Activated CD4-positive, alpha-beta T cell treated with anti-CD3 and anti-CD28 coated beads, Interleukin-2, amount 10 ng/mL, durations not matched to agents 24 days and 14 days (primary cell): ENCODE measurements at regions of chr4 and their contacts with region 1.

Region 1: GRCh38 chr4:119300101-119300978 is 21.6 kb downstream of the FABP2 start:
- DNase-seq: peak; percentile 98
- H3K4me3 Mint-ChIP-seq: peak overlapping the region; percentile 85
- H3K27ac Mint-ChIP-seq: peak overlapping the region; percentile 99
- H3K4me1 Mint-ChIP-seq: peaks cover 35% of the 10 kb centered on the region
- H3K27me3 Mint-ChIP-seq: peaks cover 3% of the 10 kb centered on the region

Region 2: GRCh38 chr4:118684873-118685811 is 615.2 kb before region 1 on chr4 and contains the start of gene METTL14:
- intact Hi-C with region 1: loop called (anchors 10 kb)
- DNase-seq: peak; percentile 96
- H3K4me3 Mint-ChIP-seq: peak within 1 kb of the TSS; percentile 98
- H3K27ac Mint-ChIP-seq: peak within 1 kb of the TSS; percentile 95
- H3K4me1 Mint-ChIP-seq: peaks cover 11% of the 10 kb centered on the region
- H3K27me3 Mint-ChIP-seq: peaks cover 2% of the 10 kb centered on the region
- total RNA-seq, gene METTL14: 50.2 and 51.9 TPM in 2 replicates

Region 3: DNA sequence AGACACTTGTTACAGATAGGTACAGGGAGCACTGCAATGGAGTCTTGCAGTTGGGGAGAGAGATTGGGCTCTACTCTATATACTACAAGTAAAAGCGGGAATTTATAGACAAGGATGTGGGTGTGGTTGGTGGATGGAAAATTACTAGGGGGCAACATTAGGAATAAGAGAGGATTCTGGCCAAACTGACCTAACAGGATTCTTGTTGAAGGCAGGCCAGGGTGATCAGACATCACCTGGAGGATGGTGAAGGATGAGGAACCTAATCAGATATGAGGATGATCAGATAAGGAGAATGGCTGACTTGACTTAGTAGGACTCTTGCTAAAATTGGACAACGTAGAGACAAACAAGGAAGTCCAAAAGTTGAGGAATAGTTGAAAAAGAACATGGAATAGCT is 79.6 kb before region 1 on chr4:
- intact Hi-C with region 1: no loop called
- DNase-seq: no peak
- H3K4me3 Mint-ChIP-seq: no peak overlapping the region
- H3K27ac Mint-ChIP-seq: no peak overlapping the region
- H3K4me1 Mint-ChIP-seq: peaks cover 4% of the 10 kb centered on the region
- H3K27me3 Mint-ChIP-seq: no peaks in the 10 kb centered on the region

Region 4: GRCh38 chr4:119238068-119238722 is 62.1 kb before region 1 on chr4:
- intact Hi-C with region 1: loop called (anchors 1 kb)
- DNase-seq: peak; percentile 78
- H3K4me3 Mint-ChIP-seq: peak overlapping the region; percentile 4
- H3K27ac Mint-ChIP-seq: peak overlapping the region; percentile 78
- H3K4me1 Mint-ChIP-seq: peaks cover 23% of the 10 kb centered on the region
- H3K27me3 Mint-ChIP-seq: no peaks in the 10 kb centered on the region

Region 5: DNA sequence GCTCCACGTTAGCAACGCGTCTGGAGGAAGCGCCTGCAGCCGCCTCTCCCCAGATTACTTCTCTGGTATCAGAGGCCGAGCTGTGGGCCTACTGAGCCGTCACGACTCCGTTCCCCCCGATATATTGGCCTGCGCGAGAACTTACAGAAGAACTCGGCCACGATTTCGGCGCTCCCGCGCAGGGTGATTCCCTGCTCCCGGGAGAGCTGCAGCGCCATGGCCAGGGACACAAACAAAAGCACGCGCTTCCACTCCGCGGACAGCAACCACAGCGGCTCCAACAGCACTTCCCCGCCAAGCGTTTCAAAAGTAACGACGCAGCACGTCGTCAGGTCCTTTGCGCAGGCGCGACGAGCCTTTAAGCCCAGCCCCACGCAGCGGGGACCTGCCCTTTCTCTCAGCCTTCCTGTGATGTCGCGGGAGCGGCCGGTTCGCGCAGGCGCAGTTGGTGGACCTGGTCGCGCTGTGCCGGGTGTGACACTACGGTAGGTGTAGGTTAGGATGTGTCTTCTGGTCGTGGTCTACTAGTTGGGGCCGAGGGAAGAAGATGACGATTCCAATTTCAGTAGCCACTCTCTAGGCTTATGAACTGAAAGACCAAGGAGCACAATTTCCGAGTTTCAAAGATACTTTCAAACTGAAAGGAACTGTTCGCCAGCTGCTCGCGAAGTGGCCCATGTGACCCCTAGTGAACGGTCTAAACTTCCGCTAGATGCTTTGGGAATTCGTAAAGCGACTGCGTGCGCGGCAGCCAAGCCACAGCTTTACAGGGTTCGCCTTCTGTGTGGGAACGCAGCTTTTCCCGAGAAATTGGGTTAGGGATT is 766.4 kb after region 1 on chr4 and contains the start of gene MAD2L1:
- intact Hi-C with region 1: loop called (anchors 1 kb)
- DNase-seq: peak; percentile 99
- H3K4me3 Mint-ChIP-seq: peak within 1 kb of the TSS; percentile 91
- H3K27ac Mint-ChIP-seq: peak within 1 kb of the TSS; percentile 100
- H3K4me1 Mint-ChIP-seq: peaks cover 48% of the 10 kb centered on the region
- H3K27me3 Mint-ChIP-seq: no peaks in the 10 kb centered on the region
- total RNA-seq, gene MAD2L1: 69.2 and 75.3 TPM in 2 replicates